Upper lobe of right lung (tissue), 1 donor: ENCODE measurements at regions of chr7 and their contacts with region 1.

Region 1: DNA sequence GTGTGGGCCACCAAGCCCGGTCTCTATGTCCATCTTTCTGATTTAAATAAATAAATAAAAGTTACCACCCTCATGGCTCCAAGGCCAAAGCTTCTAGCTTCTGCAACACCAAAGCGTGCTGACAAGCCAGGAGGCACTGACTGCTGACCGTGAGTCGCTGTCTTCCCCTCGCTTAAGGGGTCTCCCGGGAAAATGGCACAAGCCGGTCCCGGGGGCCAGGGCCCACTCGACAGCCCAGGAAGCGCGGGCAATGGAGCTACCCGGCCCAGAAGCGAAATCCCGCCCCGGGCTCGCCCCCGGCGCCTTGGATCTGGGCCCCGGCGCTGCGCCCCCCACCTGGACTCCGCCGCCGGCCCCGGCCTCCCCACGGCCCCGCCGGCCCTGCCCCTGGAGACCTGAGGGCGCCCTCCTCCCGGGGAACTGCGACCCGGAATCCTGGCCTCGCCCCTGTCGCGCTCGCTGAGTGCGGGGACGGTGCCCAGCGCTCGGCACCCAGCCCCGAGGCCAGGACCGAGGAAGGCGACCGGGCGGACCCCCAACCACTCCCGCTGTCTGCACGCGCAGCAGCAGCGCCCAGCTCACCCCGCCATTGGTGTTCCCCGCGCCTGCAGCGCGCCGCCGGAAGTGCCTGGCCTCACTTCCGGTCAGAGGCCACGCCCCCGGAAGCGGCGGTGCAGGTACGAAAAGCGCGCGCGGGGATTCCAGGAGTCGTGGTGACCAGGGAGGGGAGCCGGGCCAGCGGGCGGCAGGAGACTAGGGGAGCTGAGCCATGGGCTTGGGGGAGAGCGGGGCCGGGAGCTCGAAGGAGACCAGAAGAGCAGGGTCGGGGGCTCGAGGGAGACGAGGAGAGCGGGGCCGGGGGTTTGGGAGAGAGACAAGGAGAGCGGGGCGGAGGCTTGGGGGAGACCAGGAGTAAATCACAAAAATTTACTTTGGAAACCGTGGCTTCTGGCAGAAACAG is at the starts of genes MRM2 and NUDT1:
- DNase-seq: peak; percentile 92
- ATAC-seq: peak; percentile 91
- H3K4me3 ChIP-seq: peak within 1 kb of the TSS; percentile 92
- H3K27ac ChIP-seq: peak within 1 kb of the TSS; percentile 84
- H3K4me1 ChIP-seq: peaks cover 27% of the 10 kb centered on the region
- H3K27me3 ChIP-seq: no peaks in the 10 kb centered on the region
- CTCF ChIP-seq: no peak
- total RNA-seq, gene MRM2: 23.7 TPM
- total RNA-seq, gene NUDT1: 13.2 TPM

Region 2: GRCh38 chr7:2299131-2299829 is 57.4 kb after region 1 on chr7:
- intact Hi-C with region 1: no loop called
- DNase-seq: peak; percentile 84
- ATAC-seq: peak; percentile 93
- H3K4me3 ChIP-seq: no peak overlapping the region
- H3K27ac ChIP-seq: peak overlapping the region; percentile 75
- H3K4me1 ChIP-seq: peaks cover 8% of the 10 kb centered on the region
- H3K27me3 ChIP-seq: no peaks in the 10 kb centered on the region
- CTCF ChIP-seq: no peak

Region 3: GRCh38 chr7:2336626-2337299 is 94.9 kb after region 1 on chr7:
- intact Hi-C with region 1: no loop called
- DNase-seq: no peak
- ATAC-seq: no peak
- H3K4me3 ChIP-seq: no peak overlapping the region
- H3K27ac ChIP-seq: no peak overlapping the region
- H3K4me1 ChIP-seq: no peaks in the 10 kb centered on the region
- H3K27me3 ChIP-seq: no peaks in the 10 kb centered on the region
- CTCF ChIP-seq: no peak

Region 4: DNA sequence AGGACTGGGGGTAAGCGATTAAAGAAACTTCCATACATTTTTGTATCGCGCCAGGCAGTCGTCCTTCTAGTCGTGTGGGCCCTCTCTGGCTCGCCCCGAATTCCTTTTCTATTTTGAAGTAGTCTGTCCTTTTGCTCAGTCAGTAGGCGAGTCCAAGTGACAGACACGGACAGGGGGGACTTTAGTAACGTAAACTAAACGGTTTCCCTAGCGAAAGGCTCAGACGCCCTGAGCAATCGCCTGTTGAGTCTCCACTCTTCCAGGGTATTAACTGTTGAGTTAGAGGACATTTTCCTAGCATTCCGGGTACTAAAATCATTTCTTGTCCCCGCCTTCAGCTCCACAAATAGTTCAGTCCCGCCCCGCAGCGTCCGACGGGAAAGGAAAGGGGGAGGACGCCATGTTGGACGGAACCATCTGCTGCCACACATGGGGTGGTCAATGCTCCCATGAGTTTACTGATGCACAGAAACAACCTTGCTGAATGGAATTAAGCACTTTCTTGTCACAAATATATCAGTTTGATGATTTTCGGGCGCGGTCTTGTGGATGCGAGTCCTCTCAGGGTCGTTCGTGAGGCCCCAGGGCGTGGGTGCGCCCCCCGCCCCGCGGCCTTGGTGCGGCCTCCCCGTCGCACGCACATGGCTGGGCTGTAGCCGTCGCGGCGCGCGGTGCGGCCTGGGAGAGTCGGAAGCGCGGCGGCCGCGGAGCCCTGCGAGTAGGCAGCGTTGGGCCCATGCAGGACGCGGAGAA is 112.5 kb after region 1 on chr7 and contains the start of gene EIF3B:
- intact Hi-C with region 1: loop called (anchors 10 kb)
- DNase-seq: peak; percentile 94
- ATAC-seq: peak; percentile 94
- H3K4me3 ChIP-seq: peak within 1 kb of the TSS; percentile 99
- H3K27ac ChIP-seq: peak within 1 kb of the TSS; percentile 100
- H3K4me1 ChIP-seq: peaks cover 45% of the 10 kb centered on the region
- H3K27me3 ChIP-seq: no peaks in the 10 kb centered on the region
- CTCF ChIP-seq: no peak
- total RNA-seq, gene EIF3B: 107 TPM

Region 5: DNA sequence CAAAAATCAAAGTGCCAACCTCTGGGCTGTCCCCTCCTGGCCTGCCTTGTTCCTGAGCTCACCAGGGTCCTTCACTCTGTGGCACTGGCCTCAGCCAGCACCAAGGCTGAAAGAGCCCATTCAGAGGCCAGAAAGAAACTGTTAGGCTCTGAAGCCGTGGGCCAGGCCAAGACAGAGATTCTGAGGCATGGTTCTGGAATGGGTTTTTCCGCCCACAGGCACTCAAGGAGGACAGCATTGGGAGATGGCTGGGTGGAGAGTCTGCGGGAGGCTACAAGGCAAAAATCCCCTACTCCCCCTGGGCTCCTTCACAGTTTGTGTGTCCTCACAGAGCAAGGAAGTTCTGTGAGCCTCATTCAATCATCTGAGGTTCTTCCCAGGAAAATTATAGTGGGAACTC is 202.6 kb after region 1 on chr7:
- intact Hi-C with region 1: no loop called
- DNase-seq: no peak
- ATAC-seq: no peak
- H3K4me3 ChIP-seq: no peak overlapping the region
- H3K27ac ChIP-seq: no peak overlapping the region
- H3K4me1 ChIP-seq: peaks cover 9% of the 10 kb centered on the region
- H3K27me3 ChIP-seq: no peaks in the 10 kb centered on the region
- CTCF ChIP-seq: no peak